Breast epithelium (tissue), 4 donors: ENCODE measurements at regions of chr18 and their contacts with region 1.

Region 1: DNA sequence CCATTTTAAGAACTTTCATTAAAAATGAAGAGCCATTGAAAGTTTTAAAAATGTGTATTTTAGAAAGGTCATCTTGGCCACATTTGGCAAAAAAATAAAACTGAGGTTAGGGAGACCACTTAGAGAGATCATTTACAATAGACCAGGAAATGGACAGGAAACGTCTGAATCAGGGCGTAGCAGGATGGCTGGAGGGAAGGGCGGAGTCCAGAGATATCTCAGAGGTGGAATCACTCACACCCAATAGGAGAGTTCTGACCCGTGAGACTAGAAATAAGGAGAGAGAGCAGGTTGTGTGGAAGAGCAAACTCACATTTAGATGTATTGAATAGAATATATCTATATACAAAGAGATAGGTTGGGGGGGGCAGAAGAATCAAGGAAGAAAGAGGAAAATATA is 373.4 kb downstream of the METTL4 start:
- DNase-seq: no peak
- H3K4me3 ChIP-seq: no peak overlapping the region
- H3K27ac ChIP-seq: no peak overlapping the region
- H3K4me1 ChIP-seq: no peaks in the 10 kb centered on the region
- H3K27me3 ChIP-seq: no peaks in the 10 kb centered on the region
- CTCF ChIP-seq: no peak
- POLR2A ChIP-seq: no peak

Region 2: DNA sequence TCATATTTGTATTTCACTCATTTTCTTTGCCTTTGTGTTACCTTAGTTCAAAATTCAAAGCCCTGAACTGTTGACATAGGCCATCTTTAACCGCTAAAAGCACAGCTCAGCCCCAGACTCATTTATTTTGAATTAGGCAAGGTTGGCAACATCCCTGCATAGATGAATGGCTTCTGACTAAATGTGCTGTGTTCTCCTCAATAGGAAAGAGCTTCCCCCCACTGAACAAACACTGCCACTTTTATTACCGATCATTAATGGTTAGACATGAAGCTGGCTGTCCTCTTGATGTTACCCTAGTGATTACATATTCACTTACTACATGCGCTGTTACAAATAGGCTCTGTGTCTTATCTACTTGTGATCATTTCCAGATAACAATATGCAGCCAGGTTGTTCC is 1122.6 kb before region 1 on chr18:
- intact Hi-C with region 1: no loop called
- DNase-seq: no peak
- H3K4me3 ChIP-seq: no peak overlapping the region
- H3K27ac ChIP-seq: no peak overlapping the region
- H3K4me1 ChIP-seq: no peaks in the 10 kb centered on the region
- H3K27me3 ChIP-seq: no peaks in the 10 kb centered on the region
- CTCF ChIP-seq: no peak
- POLR2A ChIP-seq: no peak

Region 3: GRCh38 chr18:2121221-2121620 is 76.7 kb before region 1 on chr18:
- intact Hi-C with region 1: loop called (anchors 2 kb)
- DNase-seq: no peak
- H3K4me3 ChIP-seq: no peak overlapping the region
- H3K27ac ChIP-seq: no peak overlapping the region
- H3K4me1 ChIP-seq: no peaks in the 10 kb centered on the region
- H3K27me3 ChIP-seq: no peaks in the 10 kb centered on the region
- CTCF ChIP-seq: no peak
- POLR2A ChIP-seq: no peak